Esophagus muscularis mucosa (tissue), 4 donors: ENCODE measurements at regions of chr20 and their contacts with region 1.

Region 1: GRCh38 chr20:57089691-57090150 is 176.7 kb downstream of the BMP7 start:
- DNase-seq: no peak
- H3K4me3 ChIP-seq: no peak overlapping the region
- H3K27ac ChIP-seq: no peak overlapping the region
- H3K4me1 ChIP-seq: peaks cover 0 to 11% (median 7%) of the 10 kb centered on the region in 4 donors
- H3K27me3 ChIP-seq: peaks cover 0 to 66% (median 0%) of the 10 kb centered on the region in 4 donors
- CTCF ChIP-seq: peak; percentile 80 to 94 (median 88)
- EP300 ChIP-seq: no peak
- POLR2A ChIP-seq: no peak

Region 2: DNA sequence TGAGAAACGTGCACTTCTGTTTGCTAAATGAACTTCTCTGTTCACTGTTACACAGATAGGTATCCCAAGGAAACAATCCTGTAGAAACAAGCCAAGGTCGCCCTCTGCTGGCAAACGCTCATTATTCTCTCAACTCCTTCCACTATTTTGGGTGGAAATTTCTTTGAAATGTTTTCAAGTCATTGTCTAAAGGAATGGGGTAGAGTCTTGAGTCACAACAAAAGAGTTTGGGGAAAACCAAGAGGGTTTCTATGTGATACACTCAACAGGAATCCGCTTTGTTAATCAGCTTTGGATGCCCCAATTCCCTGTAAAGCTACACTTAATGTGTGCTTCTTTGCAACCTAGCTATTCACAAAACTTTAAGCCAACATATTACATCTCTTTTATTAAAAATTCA is 256.8 kb after region 1 on chr20:
- intact Hi-C with region 1: loop called (anchors 1 kb)
- DNase-seq: no peak
- H3K4me3 ChIP-seq: no peak overlapping the region
- H3K27ac ChIP-seq: no peak overlapping the region
- H3K4me1 ChIP-seq: peaks cover 0 to 6% (median under 1%) of the 10 kb centered on the region in 4 donors
- H3K27me3 ChIP-seq: peaks cover 0 to 16% (median 0%) of the 10 kb centered on the region in 4 donors
- CTCF ChIP-seq: peak; percentile 70 to 81 (median 78)
- EP300 ChIP-seq: no peak
- POLR2A ChIP-seq: no peak